ENCODE measurements at regions of chr20 and their contacts with region 1.

Region 1: GRCh38 chr20:38472513-38473372 is at the start of gene RALGAPB:
- DNase-seq: peak; percentile 99
- ATAC-seq: peak; percentile 98
- H3K4me3 Mint-ChIP-seq: peak within 1 kb of the TSS; percentile 88
- H3K27ac Mint-ChIP-seq: peak within 1 kb of the TSS; percentile 78
- H3K4me1 Mint-ChIP-seq: peaks cover 25% of the 10 kb centered on the region
- H3K27me3 Mint-ChIP-seq: peaks cover 4% of the 10 kb centered on the region
- total RNA-seq, gene RALGAPB: 36.2 to 39.7 TPM

Region 2: GRCh38 chr20:38221119-38221589 is 251.6 kb before region 1 on chr20:
- POLR2A ChIA-PET with region 1: no interaction called
- DNase-seq: peak; percentile 76
- ATAC-seq: peak; percentile 65
- H3K4me3 Mint-ChIP-seq: no peak overlapping the region
- H3K27ac Mint-ChIP-seq: no peak overlapping the region
- H3K4me1 Mint-ChIP-seq: peaks cover 1% of the 10 kb centered on the region
- H3K27me3 Mint-ChIP-seq: peaks cover 2% of the 10 kb centered on the region

Region 3: GRCh38 chr20:38446441-38447209 is 26.1 kb before region 1 on chr20:
- POLR2A ChIA-PET with region 1: interaction called, 28 read pairs
- DNase-seq: peak; percentile 96
- ATAC-seq: peak; percentile 97
- H3K4me3 Mint-ChIP-seq: peak overlapping the region; percentile 75
- H3K27ac Mint-ChIP-seq: peak overlapping the region; percentile 82
- H3K4me1 Mint-ChIP-seq: peaks cover 21% of the 10 kb centered on the region
- H3K27me3 Mint-ChIP-seq: peaks cover 12% of the 10 kb centered on the region

Region 4: DNA sequence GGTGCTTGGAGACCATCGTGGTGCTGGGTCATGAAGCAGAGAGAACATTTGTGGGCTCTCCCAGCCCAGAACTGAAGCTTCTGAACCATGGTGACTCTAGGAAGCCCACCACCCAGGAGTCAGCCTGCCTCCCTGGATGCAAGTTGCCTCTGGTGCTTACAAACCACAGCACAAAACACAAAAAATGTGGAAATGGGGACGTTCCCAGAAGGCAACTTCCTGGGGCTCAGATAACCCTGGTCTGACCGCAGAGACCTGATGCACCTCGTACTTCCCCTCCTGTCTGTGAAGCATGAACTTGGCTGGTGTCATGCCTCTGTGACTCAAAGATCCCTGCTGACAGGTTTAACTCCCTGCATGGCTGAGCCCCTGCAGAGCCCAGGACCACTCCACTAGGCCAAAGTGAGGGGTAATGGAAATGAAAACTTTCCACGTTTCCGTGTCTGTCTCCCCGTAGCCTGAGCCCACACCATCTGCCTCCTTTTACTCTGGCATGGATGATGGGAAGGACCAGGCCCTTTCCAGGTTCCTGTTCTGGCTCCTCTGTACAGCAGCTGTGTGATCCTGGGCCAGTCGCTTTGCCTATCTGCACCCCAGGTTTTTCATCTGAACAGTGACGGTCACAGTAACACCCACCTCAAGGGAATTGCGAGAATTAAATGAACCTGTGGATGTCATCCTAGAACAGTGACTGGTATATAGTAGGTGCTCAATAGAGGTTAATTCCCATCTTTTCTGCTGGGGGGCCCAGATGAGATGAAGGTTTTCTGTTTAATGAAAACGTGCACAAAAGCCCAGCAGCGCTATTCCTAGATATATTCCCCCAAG is 390.5 kb after region 1 on chr20:
- POLR2A ChIA-PET with region 1: no interaction called
- DNase-seq: no peak
- ATAC-seq: peak; percentile 78
- H3K4me3 Mint-ChIP-seq: peak overlapping the region; percentile 42
- H3K27ac Mint-ChIP-seq: peak overlapping the region; percentile 50
- H3K4me1 Mint-ChIP-seq: peaks cover 46% of the 10 kb centered on the region
- H3K27me3 Mint-ChIP-seq: no peaks in the 10 kb centered on the region